ENCODE measurements at regions of chr5 and their contacts with region 1.

Region 1: GRCh38 chr5:59608745-59609144 is 284.8 kb downstream of the PDE4D start:
- DNase-seq: peak; percentile 21
- H3K4me3 Mint-ChIP-seq: no peak overlapping the region
- H3K27ac Mint-ChIP-seq: peak overlapping the region; percentile 38
- H3K4me1 Mint-ChIP-seq: peaks cover 13% of the 10 kb centered on the region
- H3K27me3 Mint-ChIP-seq: peaks cover 14% of the 10 kb centered on the region

Region 2: DNA sequence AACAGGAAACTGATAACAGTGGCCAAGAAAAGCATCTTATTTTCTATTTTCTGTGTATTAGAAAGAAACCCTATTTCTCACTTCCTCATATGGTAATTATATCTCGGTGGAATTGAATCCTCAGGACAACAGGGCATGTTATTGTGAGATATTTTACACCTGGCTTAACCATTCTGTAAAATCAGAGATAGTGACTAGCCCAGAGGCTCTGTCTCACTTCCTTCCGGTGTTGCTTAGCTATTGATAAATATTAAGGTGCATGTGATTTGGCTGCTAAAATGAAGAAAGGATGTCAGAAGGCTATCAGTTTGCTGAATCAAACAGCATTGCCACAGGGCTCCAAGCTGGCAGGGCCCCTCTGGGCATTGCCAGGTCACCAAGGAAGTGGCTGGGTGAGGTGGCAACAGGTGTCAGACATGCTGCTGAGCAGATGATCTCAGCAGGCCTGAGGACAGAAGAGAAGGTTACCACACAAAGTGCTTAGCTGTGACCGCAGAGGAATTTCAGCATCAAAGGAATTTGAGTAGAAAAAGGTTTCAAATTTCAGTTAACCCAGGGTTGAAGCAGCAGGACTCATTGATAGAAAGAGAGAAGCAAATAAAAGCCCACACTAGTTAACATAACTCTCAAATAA is 45.9 kb before region 1 on chr5:
- CTCF ChIA-PET with region 1: no interaction called
- intact Hi-C with region 1: no loop called
- DNase-seq: peak; percentile 13
- H3K4me3 Mint-ChIP-seq: no peak overlapping the region
- H3K27ac Mint-ChIP-seq: no peak overlapping the region
- H3K4me1 Mint-ChIP-seq: no peaks in the 10 kb centered on the region
- H3K27me3 Mint-ChIP-seq: peaks cover 2% of the 10 kb centered on the region

Region 3: DNA sequence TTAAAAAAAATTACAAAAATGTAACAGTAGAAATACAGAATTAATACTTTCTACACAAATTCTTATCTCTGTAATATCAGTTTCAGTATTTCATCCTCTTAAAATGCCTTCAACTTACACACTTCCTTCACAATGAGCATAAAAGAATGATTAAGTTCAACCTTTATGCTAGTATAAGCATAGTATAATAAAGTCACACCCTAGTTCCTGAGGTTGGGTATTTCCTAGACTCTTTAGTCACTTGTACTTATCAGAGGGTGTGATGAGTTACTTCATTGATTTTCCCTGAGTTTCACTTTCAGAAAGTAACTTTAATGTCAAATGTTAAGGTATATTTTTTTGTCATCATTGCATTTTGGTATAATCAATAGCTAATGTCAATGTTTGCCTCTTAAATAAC is 17.6 kb before region 1 on chr5:
- CTCF ChIA-PET with region 1: no interaction called
- intact Hi-C with region 1: loop called (anchors 1 kb)
- DNase-seq: no peak
- H3K4me3 Mint-ChIP-seq: no peak overlapping the region
- H3K27ac Mint-ChIP-seq: no peak overlapping the region
- H3K4me1 Mint-ChIP-seq: peaks cover 10% of the 10 kb centered on the region
- H3K27me3 Mint-ChIP-seq: peaks cover 19% of the 10 kb centered on the region

Region 4: DNA sequence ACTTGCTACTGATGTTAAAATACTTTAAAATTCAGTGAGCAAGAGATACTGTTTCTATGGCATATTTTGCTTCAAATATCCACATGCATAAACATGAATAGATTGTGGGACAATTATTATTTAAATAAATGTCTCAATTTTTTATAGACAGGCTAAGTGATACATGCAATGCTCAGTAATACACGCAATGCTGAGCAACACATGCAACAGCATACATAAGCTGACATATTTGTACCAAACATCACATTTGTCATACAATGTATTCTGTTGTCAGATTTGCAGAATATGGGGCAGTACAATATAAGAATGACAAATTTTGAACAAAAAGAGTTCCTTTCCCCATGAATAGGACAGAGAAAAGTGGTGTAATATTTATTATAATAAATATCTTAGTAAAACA is 129.3 kb after region 1 on chr5:
- CTCF ChIA-PET with region 1: no interaction called
- intact Hi-C with region 1: no loop called
- DNase-seq: no peak
- H3K4me3 Mint-ChIP-seq: no peak overlapping the region
- H3K27ac Mint-ChIP-seq: no peak overlapping the region
- H3K4me1 Mint-ChIP-seq: no peaks in the 10 kb centered on the region
- H3K27me3 Mint-ChIP-seq: peaks cover under 1% of the 10 kb centered on the region

Measured in activated naive CD4-positive, alpha-beta T cell treated with anti-CD3 and anti-CD28 coated beads for 36 hours (primary cell).